GM13977 (cell line): ENCODE measurements at regions of chr13 and their contacts with region 1.

Region 1: GRCh38 chr13:98853771-98854221 is 101.3 kb upstream of the SLC15A1 start:
- DNase-seq: peak; percentile 68
- CTCF ChIP-seq: no peak

Region 2: GRCh38 chr13:99269627-99270241 is 415.9 kb after region 1 on chr13:
- in situ Hi-C with region 1: loop called (anchors 25 kb)
- DNase-seq: peak; percentile 26
- CTCF ChIP-seq: peak; percentile 87

Region 3: GRCh38 chr13:99464441-99464949 is 610.7 kb after region 1 on chr13:
- in situ Hi-C with region 1: no loop called
- DNase-seq: no peak
- CTCF ChIP-seq: no peak